Mammary epithelial cell (primary cell): ENCODE measurements at regions of chr10 and their contacts with region 1.

Region 1: GRCh38 chr10:62610649-62611229 is 193.8 kb upstream of the ADO start:
- DNase-seq: peak; percentile 49
- H3K4me3 ChIP-seq: no peak overlapping the region
- H3K27ac ChIP-seq: no peak overlapping the region
- H3K4me1 ChIP-seq: peaks cover 7% of the 10 kb centered on the region
- H3K27me3 ChIP-seq: no peaks in the 10 kb centered on the region
- CTCF ChIP-seq: peak; percentile 88 to 96

Region 2: GRCh38 chr10:62492012-62492869 is 118.5 kb before region 1 on chr10:
- CTCF ChIA-PET with region 1: no interaction called
- dilution Hi-C with region 1: no loop called
- in situ Hi-C with region 1: no loop called
- intact Hi-C with region 1: loop called (anchors 5 kb)
- DNase-seq: peak; percentile 72
- H3K4me3 ChIP-seq: no peak overlapping the region
- H3K27ac ChIP-seq: peak overlapping the region; percentile 55
- H3K4me1 ChIP-seq: peaks cover 10% of the 10 kb centered on the region
- H3K27me3 ChIP-seq: no peaks in the 10 kb centered on the region
- CTCF ChIP-seq: peak; percentile 80 to 87

Region 3: DNA sequence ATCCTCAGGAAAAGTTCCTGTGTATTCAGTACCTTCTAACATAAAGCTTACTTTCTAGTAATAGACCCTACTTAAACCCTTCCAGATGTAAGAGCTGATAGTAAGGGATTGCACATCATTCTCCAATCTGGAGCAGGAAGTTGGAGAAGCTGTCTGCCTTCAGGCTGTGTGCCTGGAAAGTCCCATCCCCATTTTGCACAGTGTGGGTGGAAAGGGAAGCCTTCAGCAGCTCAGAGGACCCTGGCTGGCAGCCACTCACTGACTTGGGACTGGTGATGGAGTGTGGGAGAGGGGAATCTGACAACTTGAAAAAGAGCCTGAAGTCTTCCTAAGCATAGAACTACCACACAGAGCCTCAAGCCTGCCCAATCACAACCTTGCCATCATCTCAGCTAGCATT is 29.7 kb after region 1 on chr10:
- CTCF ChIA-PET with region 1: no interaction called
- dilution Hi-C with region 1: no loop called
- in situ Hi-C with region 1: no loop called
- intact Hi-C with region 1: no loop called
- DNase-seq: peak; percentile 58
- H3K4me3 ChIP-seq: no peak overlapping the region
- H3K27ac ChIP-seq: no peak overlapping the region
- H3K4me1 ChIP-seq: peaks cover 14% of the 10 kb centered on the region
- H3K27me3 ChIP-seq: no peaks in the 10 kb centered on the region
- CTCF ChIP-seq: no peak

Region 4: DNA sequence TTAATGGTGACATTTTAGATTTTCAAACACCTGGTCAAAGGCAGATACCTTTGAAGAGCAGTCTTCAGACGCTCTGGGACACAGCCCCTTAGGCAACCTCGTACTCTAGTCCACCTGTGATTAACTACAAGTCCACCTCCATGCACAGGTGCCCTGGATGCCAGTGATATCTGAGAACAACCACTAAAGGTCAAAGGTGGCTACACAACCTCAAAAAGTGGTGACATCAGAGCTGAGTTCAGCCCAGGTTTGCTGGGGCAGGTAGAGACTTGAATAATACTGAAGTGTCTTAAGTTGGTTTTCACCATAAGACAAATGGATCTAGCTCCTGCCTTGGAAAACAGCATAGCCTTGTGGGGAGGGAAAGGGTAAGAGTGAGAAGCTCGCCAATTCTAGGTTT is 50.4 kb after region 1 on chr10:
- CTCF ChIA-PET with region 1: no interaction called
- dilution Hi-C with region 1: no loop called
- in situ Hi-C with region 1: no loop called
- intact Hi-C with region 1: no loop called
- DNase-seq: peak; percentile 92
- H3K4me3 ChIP-seq: no peak overlapping the region
- H3K27ac ChIP-seq: no peak overlapping the region
- H3K4me1 ChIP-seq: peaks cover 8% of the 10 kb centered on the region
- H3K27me3 ChIP-seq: no peaks in the 10 kb centered on the region
- CTCF ChIP-seq: peak in 1 of 2 donors; percentile 4

Region 5: DNA sequence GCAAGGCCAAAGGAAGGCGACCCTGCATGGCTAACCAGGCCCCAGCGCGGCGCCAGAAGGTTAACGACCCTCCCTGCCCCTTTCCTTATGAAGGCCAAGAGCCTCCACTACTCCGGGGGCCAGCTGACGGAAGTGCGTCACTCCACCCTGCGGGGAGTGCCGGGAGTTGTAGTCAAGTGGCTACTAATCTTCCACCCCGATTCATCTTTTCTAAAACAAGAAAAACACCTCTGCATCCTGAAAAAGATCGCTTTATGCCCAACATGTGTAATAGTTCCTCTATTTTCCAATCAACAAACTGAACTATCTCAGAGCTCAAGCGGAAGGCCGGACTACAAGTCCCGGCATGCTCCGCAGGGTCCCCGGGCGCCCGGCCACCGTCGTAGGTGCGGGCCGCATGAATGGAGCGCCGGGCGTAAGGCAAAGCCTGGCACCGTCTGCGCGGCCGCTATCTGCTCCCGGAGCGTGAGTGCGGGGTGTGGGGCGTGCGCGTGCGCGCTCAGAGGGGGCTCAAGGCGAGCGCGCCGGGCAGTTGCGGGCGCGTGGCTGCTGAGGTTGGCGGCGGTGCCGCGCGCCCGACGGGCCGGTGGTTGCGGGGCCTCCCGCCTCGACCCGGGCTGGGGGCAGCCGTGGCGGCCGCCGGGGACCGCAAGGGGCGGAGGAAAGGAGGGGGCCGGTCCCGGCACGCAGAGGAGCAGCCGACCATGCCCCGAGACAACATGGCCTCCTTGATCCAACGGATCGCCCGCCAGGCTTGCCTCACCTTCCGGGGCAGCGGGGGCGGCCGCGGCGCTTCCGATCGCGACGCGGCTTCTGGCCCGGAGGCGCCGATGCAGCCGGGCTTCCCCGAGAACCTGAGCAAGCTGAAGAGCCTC is 193.9 kb after region 1 on chr10 and contains the start of gene ADO:
- CTCF ChIA-PET with region 1: no interaction called
- dilution Hi-C with region 1: no loop called
- in situ Hi-C with region 1: loop called in 1 of 2 experiments (anchors 10 kb)
- intact Hi-C with region 1: loop called (anchors 1 kb)
- DNase-seq: peak; percentile 73
- H3K4me3 ChIP-seq: peak within 1 kb of the TSS; percentile 96 to 100 (median 98)
- H3K27ac ChIP-seq: peak within 1 kb of the TSS; percentile 76
- H3K4me1 ChIP-seq: peaks cover 20% of the 10 kb centered on the region
- H3K27me3 ChIP-seq: no peaks in the 10 kb centered on the region
- CTCF ChIP-seq: no peak
- total RNA-seq, gene ADO: 22.3 to 26.5 TPM

Region 6: DNA sequence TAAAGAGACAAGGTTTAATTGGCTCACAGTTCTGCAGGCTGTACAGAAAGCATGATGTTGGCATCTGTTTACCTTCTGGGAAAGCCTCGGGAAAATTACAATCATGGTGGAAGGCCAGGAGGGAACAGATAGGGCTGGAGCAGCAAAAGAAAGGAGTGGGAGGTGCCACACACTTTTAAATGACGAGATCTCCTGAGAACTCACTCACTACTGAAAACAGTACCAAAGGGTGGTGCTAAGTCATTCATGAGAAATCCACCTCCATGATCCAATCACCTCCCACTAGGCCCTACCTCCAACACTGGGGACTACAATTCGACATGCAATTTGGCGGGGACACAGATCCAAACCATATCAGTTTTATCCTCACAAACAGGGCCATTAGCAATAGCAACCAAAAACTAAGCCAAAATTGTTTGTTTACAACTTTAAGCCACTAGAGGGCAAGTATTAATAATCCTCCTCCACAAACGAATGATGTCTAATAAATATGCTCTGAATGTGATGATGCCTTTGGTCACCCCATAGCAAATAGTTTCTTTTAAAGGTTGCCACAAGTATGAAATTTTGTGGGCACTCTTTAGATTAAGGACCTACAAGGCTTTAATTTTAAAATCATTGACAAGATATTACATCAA is 393.2 kb after region 1 on chr10:
- CTCF ChIA-PET with region 1: no interaction called
- dilution Hi-C with region 1: no loop called
- in situ Hi-C with region 1: no loop called
- intact Hi-C with region 1: loop called (anchors 5 kb)
- DNase-seq: no peak
- H3K4me3 ChIP-seq: no peak overlapping the region
- H3K27ac ChIP-seq: no peak overlapping the region
- H3K4me1 ChIP-seq: peaks cover 14% of the 10 kb centered on the region
- H3K27me3 ChIP-seq: no peaks in the 10 kb centered on the region
- CTCF ChIP-seq: peak; percentile 30 to 40